Astrocyte of the cerebellum (primary cell): ENCODE measurements at regions of chr1 and their contacts with region 1.

Region 1: DNA sequence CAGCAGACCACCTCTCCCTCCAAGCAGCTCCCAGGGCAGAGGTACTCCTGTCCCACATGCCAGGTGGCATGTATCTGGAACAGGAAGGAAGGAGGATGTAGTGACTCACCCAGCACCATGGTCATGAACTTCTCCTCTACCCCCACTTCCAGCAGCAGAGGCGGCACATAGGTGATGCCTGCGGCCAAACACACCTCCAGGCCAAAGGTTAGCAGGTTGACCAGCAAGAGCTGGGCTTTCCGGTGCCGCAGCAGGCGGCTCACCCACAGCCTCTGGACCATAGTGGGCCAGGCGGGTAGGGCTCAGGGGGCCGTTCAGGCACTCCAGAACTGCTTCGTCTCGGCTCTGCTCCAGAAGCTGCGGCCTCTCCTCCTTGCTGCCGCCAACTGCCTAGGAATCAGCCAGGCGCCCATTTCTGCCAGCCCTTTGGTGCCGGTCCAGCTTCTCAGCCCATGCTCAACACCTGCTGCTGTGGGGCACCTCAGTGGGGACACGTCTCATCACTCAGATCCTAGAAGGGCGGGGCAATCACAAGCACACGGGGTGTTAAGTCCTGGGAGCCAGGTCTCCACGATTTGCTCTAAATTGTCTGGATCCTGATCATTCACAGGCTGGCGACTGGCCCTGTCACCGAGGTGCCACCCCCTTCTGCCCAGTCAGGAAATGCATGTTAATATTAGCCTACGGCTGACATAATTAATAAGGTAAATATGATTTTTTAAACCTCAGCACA is 15.8 kb downstream of the SLC45A3 start:
- DNase-seq: no peak
- H3K4me3 ChIP-seq: no peak overlapping the region
- CTCF ChIP-seq: no peak

Region 2: DNA sequence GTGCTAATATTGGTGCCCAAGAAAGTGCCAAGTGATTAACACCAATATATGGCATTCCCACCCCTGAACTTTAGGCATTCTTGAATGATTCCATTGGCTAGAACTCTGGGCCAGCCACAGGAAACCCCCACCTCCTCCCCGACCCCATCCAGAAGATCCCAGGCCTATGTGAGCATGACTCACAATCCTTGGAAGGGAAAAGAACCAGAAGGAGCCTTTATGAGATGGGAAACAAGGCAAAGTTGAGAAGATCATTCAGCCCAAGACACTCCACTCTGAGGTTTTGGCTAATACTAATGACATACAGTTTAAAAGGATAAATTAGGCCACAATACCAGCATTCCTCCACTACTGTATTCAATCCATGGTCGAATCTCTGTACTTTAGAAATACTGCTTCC is 54.5 kb before region 1 on chr1:
- in situ Hi-C with region 1: no loop called
- DNase-seq: peak; percentile 50
- H3K4me3 ChIP-seq: no peak overlapping the region
- CTCF ChIP-seq: no peak

Region 3: GRCh38 chr1:205711104-205712020 is 46.8 kb after region 1 on chr1:
- in situ Hi-C with region 1: loop called (anchors 5 kb)
- DNase-seq: peak; percentile 81
- H3K4me3 ChIP-seq: no peak overlapping the region
- CTCF ChIP-seq: peak; percentile 92